ENCODE measurements at regions of chr1 and their contacts with region 1.

Region 1: DNA sequence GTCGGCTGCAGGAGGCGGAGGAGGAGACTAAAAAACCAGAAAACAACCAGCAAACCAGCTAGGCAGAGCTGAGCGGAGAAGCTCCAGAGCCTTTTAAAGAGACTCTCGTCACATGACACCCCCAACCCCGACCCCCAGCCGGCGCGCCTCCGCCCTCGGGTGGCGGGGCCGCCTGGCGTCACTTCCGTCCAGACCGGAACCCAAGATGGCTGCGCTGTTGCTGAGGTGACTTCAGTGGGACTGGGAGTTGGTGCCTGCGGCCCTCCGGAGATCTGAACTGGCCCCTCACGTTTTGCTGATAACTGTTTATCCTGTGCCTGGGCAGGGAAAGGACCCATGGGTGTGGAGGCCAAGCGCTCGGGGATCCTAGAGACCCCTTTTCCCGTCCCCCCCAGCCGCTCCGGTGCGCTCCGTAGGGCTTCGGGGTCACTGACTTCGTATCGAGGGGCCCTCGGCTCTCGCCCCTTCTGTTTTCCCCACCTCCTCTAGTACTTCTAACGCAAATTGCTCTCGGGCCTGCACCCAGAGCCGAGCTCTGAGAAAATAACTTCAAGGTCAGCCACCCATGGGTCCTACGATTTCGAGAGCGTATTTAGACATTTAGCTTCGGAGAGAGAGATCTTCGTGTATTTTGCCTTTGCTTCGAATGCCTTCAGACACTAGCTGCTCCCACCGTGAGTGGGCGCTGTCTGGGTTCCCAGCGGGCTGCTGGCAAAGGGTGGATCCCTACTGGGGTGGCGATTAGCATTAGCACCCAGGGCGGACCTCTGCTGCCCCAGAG is at the start of gene SDHC:
- DNase-seq: peak; percentile 77 to 87
- ATAC-seq: peak; percentile 96 to 97
- H3K4me3 ChIP-seq: peak within 1 kb of the TSS; percentile 75 to 99 (median 93)
- H3K27ac ChIP-seq: peak within 1 kb of the TSS; percentile 95 to 99 (median 96)
- H3K4me1 ChIP-seq: peaks cover 19 to 20% of the 10 kb centered on the region in 2 donors
- H3K27me3 ChIP-seq: no peaks in the 10 kb centered on the region
- CTCF ChIP-seq: peak in 3 of 5 experiments; percentile 14 to 31 (median 22)
- POLR2A ChIP-seq: peak; percentile 82 to 83
- total RNA-seq, gene SDHC: 47.5 to 112 (median 63.8) TPM

Region 2: DNA sequence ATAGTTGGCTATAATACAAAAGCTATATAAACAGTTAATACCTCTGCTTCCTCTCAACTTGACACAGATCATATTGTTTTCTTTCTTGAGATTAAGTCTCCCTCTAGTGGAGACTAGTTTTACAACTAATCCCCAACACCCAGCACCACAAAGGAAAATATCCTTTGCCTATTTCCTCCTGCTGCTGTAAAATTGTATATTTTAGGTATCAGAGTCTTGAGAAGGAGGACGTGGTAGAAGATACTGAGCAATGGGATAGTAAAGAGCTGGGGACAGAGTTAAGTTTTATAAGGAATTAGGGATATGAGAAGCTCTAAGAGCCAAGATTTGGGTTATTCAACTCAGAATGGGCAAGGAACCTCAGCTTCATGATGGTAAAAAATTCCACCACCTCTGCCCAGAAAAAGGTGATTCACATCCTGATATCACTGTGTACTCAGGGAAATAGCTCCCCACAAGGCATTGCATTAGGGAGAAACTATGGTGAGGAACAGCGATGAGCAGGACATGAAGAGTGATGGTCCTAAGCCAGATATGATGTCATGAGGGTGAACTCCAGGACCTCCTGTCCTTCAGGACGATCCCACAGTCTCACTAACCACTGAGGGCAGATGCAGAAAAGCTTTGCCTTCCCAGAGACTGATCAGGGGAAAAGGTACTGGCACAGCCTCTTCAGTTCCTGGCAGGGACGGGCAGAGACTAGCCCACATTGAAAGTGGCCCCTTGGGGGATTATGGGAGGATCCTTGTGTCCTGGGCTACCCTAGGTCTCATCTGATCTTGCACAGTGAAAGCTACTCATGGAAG is 68.0 kb after region 1 on chr1:
- in situ Hi-C with region 1: loop called in 1 of 4 experiments (anchors 10 kb)
- intact Hi-C with region 1: loop called (anchors 5 kb)
- DNase-seq: no peak
- ATAC-seq: peak; percentile 85 to 93
- H3K4me3 ChIP-seq: no peak overlapping the region
- H3K27ac ChIP-seq: peak overlapping the region; percentile 29 to 49 (median 40)
- H3K4me1 ChIP-seq: peaks cover 0 to 3% of the 10 kb centered on the region in 2 donors
- H3K27me3 ChIP-seq: no peaks in the 10 kb centered on the region
- CTCF ChIP-seq: peak; percentile 40 to 69 (median 59)
- POLR2A ChIP-seq: no peak